ENCODE measurements at regions of chr1 and their contacts with region 1.

Region 1: DNA sequence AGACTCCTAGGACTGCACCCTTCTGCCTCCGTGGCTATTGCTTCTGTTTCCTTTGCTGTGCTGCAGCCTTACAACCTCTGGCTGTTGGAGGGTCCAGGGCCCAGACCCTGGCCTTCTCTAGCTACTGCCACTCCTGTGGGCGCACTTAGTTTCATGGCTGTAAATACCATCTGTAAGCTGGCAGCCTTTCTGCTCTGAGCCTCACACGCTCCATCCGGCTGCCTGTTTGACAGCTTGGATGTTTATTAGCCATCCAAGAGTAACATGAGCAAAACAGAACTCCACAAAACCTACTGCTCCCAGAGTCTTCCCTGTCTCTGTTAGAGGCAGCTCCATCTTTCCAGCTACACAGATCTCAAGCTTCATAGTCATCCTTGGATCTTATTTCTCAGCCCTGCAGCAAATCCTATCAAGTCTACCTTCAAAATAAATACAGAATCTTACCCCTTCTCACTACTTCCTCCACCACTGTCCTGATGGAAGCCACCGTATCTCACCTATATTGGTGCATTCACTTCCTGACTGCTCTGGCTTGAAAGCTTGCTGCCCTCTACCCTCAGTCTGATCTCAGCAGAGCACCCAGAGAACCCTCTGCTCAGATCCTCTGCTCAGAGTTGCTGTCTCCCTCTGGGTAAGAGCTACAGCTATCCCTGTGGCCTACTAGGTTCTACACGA is 19.1 kb downstream of the SLC25A33 start:
- DNase-seq: no peak
- H3K4me3 ChIP-seq: no peak overlapping the region
- CTCF ChIP-seq: no peak

Region 2: DNA sequence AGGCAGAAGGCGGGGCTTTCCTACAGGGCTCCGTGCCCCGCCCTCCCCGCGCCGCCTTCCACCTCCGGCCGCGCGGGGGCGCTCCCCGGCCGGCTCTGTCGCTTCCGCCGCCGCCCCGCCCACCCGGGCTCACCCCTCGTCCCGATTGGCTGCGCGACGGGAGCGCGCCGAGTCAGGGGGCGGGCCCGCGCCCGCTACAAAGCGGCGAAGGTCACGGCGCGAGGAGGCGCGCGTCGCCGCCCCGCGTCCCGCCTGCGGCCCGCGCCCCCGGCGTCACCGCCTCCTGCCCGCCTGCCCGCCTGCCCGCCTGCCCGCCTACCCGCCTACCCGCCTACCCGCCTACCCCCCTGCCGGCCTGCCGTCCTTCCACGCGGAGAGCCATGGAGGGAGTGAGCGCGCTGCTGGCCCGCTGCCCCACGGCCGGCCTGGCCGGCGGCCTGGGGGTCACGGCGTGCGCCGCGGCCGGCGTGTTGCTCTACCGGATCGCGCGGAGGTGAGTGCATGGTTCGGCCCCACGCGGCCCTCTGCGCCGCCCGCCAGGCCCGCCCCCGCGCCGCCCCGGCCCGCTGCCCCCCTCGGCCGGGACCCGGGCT is 30.2 kb after region 1 on chr1 and contains the start of gene TMEM201:
- CTCF ChIA-PET with region 1: interaction called, 11 read pairs
- POLR2A ChIA-PET with region 1: no interaction called
- DNase-seq: peak; percentile 4
- H3K4me3 ChIP-seq: peak within 1 kb of the TSS; percentile 67
- CTCF ChIP-seq: peak; percentile 64

Measured in AG04449 (cell line).